Heart left ventricle (tissue), 16 donors: ENCODE measurements at regions of chr20 and their contacts with region 1.

Region 1: DNA sequence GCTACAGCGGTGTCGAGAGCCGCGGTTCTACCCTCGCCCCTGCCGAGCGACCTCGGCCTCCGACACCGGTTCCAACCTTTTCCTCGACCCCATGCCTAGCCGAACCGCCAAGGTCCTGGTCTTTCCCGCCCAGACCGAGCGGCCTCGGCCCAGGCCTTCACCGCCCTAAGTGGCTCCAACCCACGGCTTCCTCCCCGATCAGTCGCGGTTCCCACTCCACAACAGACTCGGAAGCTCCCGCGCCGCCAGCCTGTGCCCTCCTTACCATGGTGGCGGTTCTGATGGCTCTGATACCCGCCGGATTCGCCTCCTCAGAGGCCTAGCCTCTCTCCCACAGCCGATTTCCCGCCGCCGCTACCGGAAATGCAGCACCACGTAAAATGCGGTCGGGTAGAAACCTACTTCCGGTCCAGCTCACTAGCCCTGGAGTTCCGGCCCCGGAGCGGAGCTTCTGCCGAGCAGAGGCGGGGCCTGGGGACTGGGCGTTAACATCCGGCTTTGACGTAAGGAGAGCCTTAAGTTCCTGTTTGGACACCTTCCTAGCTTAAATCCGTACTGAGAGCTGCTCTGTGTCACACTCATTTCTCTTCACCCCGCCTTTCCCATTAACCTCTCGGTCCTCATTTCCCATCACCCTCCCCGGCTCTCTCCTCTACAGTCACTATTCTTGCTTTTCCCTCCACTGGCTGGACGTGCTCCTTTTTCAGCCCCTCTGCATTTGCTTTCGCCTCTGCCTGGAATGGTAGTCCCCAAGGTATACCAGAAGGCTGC is at the start of gene SNRPB:
- DNase-seq: peak; percentile 96 to 97 (median 97)
- ATAC-seq: peak; percentile 98 to 99 (median 99)
- H3K4me3 ChIP-seq: peak within 1 kb of the TSS; percentile 69 to 94 (median 76)
- H3K27ac ChIP-seq: peak within 1 kb of the TSS; percentile 65 to 95 (median 92)
- H3K4me1 ChIP-seq: peaks cover 0 to 35% (median 16%) of the 10 kb centered on the region in 12 donors
- H3K27me3 ChIP-seq: no peaks in the 10 kb centered on the region
- CTCF ChIP-seq: no peak
- POLR2A ChIP-seq: peak; percentile 81 to 97
- total RNA-seq, gene SNRPB: 36.8 to 132 (median 75.5) TPM

Region 2: GRCh38 chr20:2093159-2093781 is 377.3 kb before region 1 on chr20:
- intact Hi-C with region 1: loop called in 1 of 10 experiments (anchors 10 kb)
- DNase-seq: no peak
- ATAC-seq: no peak
- H3K4me3 ChIP-seq: no peak overlapping the region
- H3K27ac ChIP-seq: no peak overlapping the region
- H3K4me1 ChIP-seq: no peaks in the 10 kb centered on the region
- H3K27me3 ChIP-seq: peaks cover 0 to 54% (median 14%) of the 10 kb centered on the region in 9 donors
- CTCF ChIP-seq: peak in 9 of 12 donors; percentile 11 to 47 (median 28)
- POLR2A ChIP-seq: no peak

Region 3: GRCh38 chr20:2508631-2509467 is 38.2 kb after region 1 on chr20 and contains the start of gene ZNF343:
- intact Hi-C with region 1: loop called in 4 of 10 experiments (anchors 2 to 5 kb)
- DNase-seq: peak; percentile 83 to 85 (median 83)
- ATAC-seq: peak; percentile 94 to 98 (median 96)
- H3K4me3 ChIP-seq: peak within 1 kb of the TSS; percentile 55 to 89 (median 76)
- H3K27ac ChIP-seq: peak within 1 kb of the TSS; percentile 85 to 95 (median 89)
- H3K4me1 ChIP-seq: peaks cover 0 to 18% (median 15%) of the 10 kb centered on the region in 12 donors
- H3K27me3 ChIP-seq: no peaks in the 10 kb centered on the region
- CTCF ChIP-seq: no peak
- POLR2A ChIP-seq: peak in 1 of 2 donors; percentile 57
- total RNA-seq, gene ZNF343: 4.2 to 8.6 (median 5.4) TPM